ENCODE measurements at regions of chr7 and their contacts with region 1.

Region 1: GRCh38 chr7:44477063-44477830 is 13.2 kb downstream of the NUDCD3 start:
- DNase-seq: peak; percentile 40
- ATAC-seq: peak; percentile 95
- H3K4me3 ChIP-seq: no peak overlapping the region
- H3K27ac ChIP-seq: no peak overlapping the region
- H3K4me1 ChIP-seq: peaks cover 0 to 19% of the 10 kb centered on the region in 2 experiments; a peak in 2 of 4 replicates
- H3K27me3 ChIP-seq: no peaks in the 10 kb centered on the region
- CTCF ChIP-seq: peak; percentile 62 to 92 (median 92)
- POLR2A ChIP-seq: no peak
- RAD21 ChIP-seq: peak; percentile 82

Region 2: GRCh38 chr7:44213877-44214388 is 263.3 kb before region 1 on chr7:
- CTCF ChIA-PET with region 1: no interaction called
- POLR2A ChIA-PET with region 1: no interaction called
- RAD21 ChIA-PET with region 1: no interaction called
- intact Hi-C with region 1: loop called (anchors 1 kb)
- DNase-seq: no peak
- ATAC-seq: peak; percentile 13; the same call in 1 of the 2 replicates
- H3K4me3 ChIP-seq: no peak overlapping the region
- H3K27ac ChIP-seq: 0 out of 2 replicates have a peak overlapping the region, but pooled peaks have one; percentile 22
- H3K4me1 ChIP-seq: no peaks in the 10 kb centered on the region
- H3K27me3 ChIP-seq: no peaks in the 10 kb centered on the region
- CTCF ChIP-seq: no peak
- POLR2A ChIP-seq: no peak
- RAD21 ChIP-seq: no peak

Region 3: GRCh38 chr7:44240983-44241510 is 236.2 kb before region 1 on chr7:
- CTCF ChIA-PET with region 1: interaction called, 3 read pairs
- POLR2A ChIA-PET with region 1: no interaction called
- RAD21 ChIA-PET with region 1: no interaction called
- intact Hi-C with region 1: loop called (anchors 1 kb)
- DNase-seq: peak; percentile 66
- ATAC-seq: peak; percentile 98
- H3K4me3 ChIP-seq: no peak overlapping the region
- H3K27ac ChIP-seq: no peak overlapping the region
- H3K4me1 ChIP-seq: peaks cover 0 to 5% of the 10 kb centered on the region in 2 experiments; a peak in 1 of 4 replicates
- H3K27me3 ChIP-seq: no peaks in the 10 kb centered on the region
- CTCF ChIP-seq: peak; percentile 87 to 91 (median 89)
- POLR2A ChIP-seq: no peak
- RAD21 ChIP-seq: peak; percentile 93